ENCODE measurements at regions of chr1 and their contacts with region 1.

Region 1: GRCh38 chr1:180252638-180253536 is 22.8 kb downstream of the LHX4 start:
- DNase-seq: no peak
- H3K4me3 ChIP-seq: no peak overlapping the region
- CTCF ChIP-seq: peak; percentile 82

Region 2: GRCh38 chr1:180241716-180242526 is 11.0 kb before region 1 on chr1:
- CTCF ChIA-PET with region 1: interaction called, 52 read pairs
- POLR2A ChIA-PET with region 1: no interaction called
- DNase-seq: no peak
- H3K4me3 ChIP-seq: no peak overlapping the region
- CTCF ChIP-seq: no peak

Region 3: GRCh38 chr1:180282401-180283044 is 29.6 kb after region 1 on chr1:
- CTCF ChIA-PET with region 1: interaction called, 15 read pairs
- POLR2A ChIA-PET with region 1: no interaction called
- DNase-seq: no peak
- H3K4me3 ChIP-seq: no peak overlapping the region
- CTCF ChIP-seq: no peak

Region 4: DNA sequence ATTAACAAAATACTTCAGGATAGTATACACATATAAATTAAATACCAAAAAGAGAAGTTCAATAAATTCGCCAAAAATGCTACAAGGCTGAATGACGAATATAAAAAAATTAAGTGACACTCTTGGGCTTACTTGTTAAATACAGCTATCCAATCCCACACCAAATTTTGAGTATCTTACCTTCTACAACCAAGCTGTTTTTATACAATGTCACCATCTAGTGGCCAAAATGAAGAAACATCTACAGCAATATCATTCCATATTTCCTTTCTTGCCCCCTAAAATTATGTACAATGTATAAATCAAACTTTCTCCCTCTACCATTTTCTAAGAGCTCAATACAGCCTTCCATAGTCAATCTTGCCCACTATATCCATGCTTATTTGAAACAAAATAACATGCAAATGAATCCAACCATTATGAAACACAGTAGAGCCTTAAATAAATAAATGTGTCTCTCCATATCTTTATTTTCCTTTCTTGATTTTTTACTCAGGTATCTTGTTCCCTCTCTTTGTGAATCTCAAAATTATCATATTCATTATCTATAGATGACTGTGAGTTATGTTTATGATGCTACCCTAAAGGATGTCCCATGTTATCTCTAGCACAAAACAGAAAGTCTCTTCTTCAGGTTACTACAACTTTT is 163.2 kb after region 1 on chr1:
- CTCF ChIA-PET with region 1: interaction called, 50 read pairs
- POLR2A ChIA-PET with region 1: no interaction called
- DNase-seq: no peak
- H3K4me3 ChIP-seq: no peak overlapping the region
- CTCF ChIP-seq: peak; percentile 33

Region 5: GRCh38 chr1:180494370-180494769 is 241.5 kb after region 1 on chr1:
- CTCF ChIA-PET with region 1: interaction called, 16 read pairs
- POLR2A ChIA-PET with region 1: no interaction called
- DNase-seq: no peak
- H3K4me3 ChIP-seq: no peak overlapping the region
- CTCF ChIP-seq: no peak